ENCODE measurements at regions of chr17 and their contacts with region 1.

Region 1: GRCh38 chr17:39450847-39451581 is at the start of gene MED1:
- DNase-seq: peak; percentile 98
- H3K4me3 Mint-ChIP-seq: peak within 1 kb of the TSS; percentile 99
- H3K27ac Mint-ChIP-seq: peak within 1 kb of the TSS; percentile 98
- H3K4me1 Mint-ChIP-seq: peaks cover 16% of the 10 kb centered on the region
- H3K27me3 Mint-ChIP-seq: no peaks in the 10 kb centered on the region
- total RNA-seq, gene MED1: 70.9 and 73.0 TPM in 2 replicates

Region 2: DNA sequence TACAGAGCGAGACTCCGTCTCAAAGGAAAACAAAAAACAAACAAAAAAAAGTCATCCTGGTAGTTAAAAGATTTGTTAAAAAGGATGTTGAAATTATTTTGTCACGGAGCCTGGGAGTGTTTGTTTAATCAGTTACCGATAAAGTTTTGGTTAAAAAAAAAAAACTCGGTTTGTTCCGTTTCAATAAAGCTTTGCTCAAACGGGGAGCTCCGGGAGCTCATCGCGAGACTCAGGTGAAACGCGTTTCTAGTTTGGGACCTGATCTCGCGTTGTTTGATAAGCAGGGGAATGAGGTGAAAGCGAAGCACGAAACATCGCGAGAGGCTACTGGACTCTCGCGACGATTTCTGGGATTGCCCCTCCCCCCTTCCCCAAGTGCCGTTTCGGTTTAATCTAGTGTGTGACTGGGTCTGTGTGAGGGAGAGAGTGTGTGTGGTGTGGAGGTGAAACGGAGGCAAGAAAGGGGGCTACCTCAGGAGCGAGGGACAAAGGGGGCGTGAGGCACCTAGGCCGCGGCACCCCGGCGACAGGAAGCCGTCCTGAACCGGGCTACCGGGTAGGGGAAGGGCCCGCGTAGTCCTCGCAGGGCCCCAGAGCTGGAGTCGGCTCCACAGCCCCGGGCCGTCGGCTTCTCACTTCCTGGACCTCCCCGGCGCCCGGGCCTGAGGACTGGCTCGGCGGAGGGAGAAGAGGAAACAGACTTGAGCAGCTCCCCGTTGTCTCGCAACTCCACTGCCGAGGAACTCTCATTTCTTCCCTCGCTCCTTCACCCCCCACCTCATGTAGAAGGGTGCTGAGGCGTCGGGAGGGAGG is 10.3 kb after region 1 on chr17 and contains the start of gene CDK12:
- intact Hi-C with region 1: loop called (anchors 1 kb)
- DNase-seq: peak; percentile 98
- H3K4me3 Mint-ChIP-seq: peak within 1 kb of the TSS; percentile 87
- H3K27ac Mint-ChIP-seq: peak within 1 kb of the TSS; percentile 94
- H3K4me1 Mint-ChIP-seq: peaks cover 29% of the 10 kb centered on the region
- H3K27me3 Mint-ChIP-seq: no peaks in the 10 kb centered on the region
- total RNA-seq, gene CDK12: 89.1 and 90.4 TPM in 2 replicates